ENCODE measurements at regions of chr4 and their contacts with region 1.

Region 1: GRCh38 chr4:163554870-163555465 is 60.5 kb downstream of the TMA16 start:
- DNase-seq: no peak
- ATAC-seq: no peak
- H3K4me3 Mint-ChIP-seq: no peak overlapping the region
- H3K27ac Mint-ChIP-seq: no peak overlapping the region
- H3K4me1 Mint-ChIP-seq: peaks cover 34% of the 10 kb centered on the region
- H3K27me3 Mint-ChIP-seq: no peaks in the 10 kb centered on the region

Region 2: GRCh38 chr4:163344147-163345125 is 210.5 kb before region 1 on chr4:
- CTCF ChIA-PET with region 1: no interaction called
- POLR2A ChIA-PET with region 1: no interaction called
- intact Hi-C with region 1: no loop called
- DNase-seq: no peak
- ATAC-seq: no peak
- H3K4me3 Mint-ChIP-seq: no peak overlapping the region
- H3K27ac Mint-ChIP-seq: no peak overlapping the region
- H3K4me1 Mint-ChIP-seq: peaks cover 5% of the 10 kb centered on the region
- H3K27me3 Mint-ChIP-seq: peaks cover 33% of the 10 kb centered on the region

Region 3: DNA sequence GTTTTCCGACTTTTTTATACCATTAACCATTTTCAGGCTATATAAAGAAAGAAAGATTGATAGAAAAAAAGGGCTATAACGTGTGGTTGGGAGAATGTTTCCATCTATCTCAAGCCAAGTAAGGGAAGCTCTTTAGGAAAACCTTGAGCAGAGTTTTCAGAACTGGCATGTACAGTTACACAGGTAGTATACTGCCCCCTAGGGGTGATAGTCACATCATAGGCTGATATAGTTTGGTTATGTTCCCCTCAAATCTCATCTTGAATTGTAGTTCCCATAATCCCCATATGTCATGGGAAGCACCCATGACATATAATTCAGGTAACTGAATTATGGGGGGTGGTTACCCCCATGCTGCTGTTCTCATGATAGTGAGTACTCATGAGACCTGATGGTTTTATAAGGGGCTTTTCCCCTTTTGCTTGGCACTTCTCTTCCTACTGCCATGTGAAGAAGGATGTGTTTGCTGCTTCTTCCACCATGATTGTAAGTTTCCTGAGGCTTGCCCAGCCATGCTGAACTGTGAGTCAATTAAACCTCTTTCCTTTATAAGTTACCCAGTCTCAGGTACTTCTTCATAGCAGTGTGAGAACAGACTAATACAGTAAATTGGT is 126.3 kb after region 1 on chr4:
- CTCF ChIA-PET with region 1: interaction called, 125 read pairs
- POLR2A ChIA-PET with region 1: no interaction called
- intact Hi-C with region 1: loop called (anchors 1 kb)
- DNase-seq: peak; percentile 13
- ATAC-seq: peak; percentile 74
- H3K4me3 Mint-ChIP-seq: no peak overlapping the region
- H3K27ac Mint-ChIP-seq: no peak overlapping the region
- H3K4me1 Mint-ChIP-seq: no peaks in the 10 kb centered on the region
- H3K27me3 Mint-ChIP-seq: no peaks in the 10 kb centered on the region

Region 4: DNA sequence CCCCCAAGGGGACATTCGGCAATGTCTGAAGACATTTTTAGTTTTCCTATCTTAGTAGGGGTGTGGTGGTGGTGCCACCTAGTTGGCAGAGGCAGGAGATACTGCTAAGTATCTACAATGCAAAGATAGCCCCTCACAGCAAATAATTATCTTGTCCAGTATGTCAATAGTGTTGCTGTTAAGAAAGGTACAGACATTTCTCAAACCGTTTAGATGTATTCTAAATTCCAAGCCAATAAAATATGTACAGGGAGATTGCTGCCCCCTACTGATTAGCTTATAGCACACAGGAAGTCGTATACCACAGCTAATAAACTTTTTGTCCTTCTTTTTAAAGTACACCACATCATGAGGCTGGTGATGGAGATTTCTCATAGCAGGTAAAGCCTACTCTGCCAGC is 200.0 kb after region 1 on chr4:
- CTCF ChIA-PET with region 1: interaction called, 10 read pairs
- POLR2A ChIA-PET with region 1: no interaction called
- intact Hi-C with region 1: loop called (anchors 1 to 2 kb)
- DNase-seq: no peak
- ATAC-seq: peak; percentile 42
- H3K4me3 Mint-ChIP-seq: no peak overlapping the region
- H3K27ac Mint-ChIP-seq: no peak overlapping the region
- H3K4me1 Mint-ChIP-seq: peaks cover 2% of the 10 kb centered on the region
- H3K27me3 Mint-ChIP-seq: peaks cover under 1% of the 10 kb centered on the region

Measured in activated CD4-positive, alpha-beta T cell treated with anti-CD3 and anti-CD28 coated beads for 36 hours (primary cell).